ENCODE measurements at regions of chr19 and their contacts with region 1.

Region 1: GRCh38 chr19:40025938-40026596 is 29.2 kb downstream of the ZNF546 start:
- DNase-seq: no peak
- ATAC-seq: no peak
- H3K4me3 ChIP-seq: no peak overlapping the region
- H3K27ac ChIP-seq: no peak overlapping the region
- H3K4me1 ChIP-seq: no peaks in the 10 kb centered on the region
- H3K27me3 ChIP-seq: no peaks in the 10 kb centered on the region
- CTCF ChIP-seq: no peak

Region 2: DNA sequence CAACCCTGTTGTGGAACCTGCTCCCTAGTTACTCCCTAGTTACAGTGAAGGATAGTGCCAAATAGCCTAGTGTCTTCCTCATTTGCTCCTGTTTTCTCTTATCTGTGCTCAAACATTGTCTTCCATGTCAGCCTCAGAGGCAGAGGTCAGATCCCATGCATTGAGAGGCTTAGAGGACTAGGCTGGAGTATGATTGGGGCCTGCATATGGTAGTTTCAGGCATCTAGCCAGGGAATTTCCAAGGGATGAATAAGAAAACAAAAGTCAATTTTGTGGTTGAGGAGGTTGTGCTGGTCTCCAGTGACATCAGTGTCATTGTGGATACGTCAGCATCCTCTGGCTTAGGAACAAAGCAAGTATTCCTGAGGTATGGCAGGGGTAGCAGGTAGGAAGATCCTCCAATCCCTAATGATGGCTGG is 19.8 kb before region 1 on chr19:
- CTCF ChIA-PET with region 1: no interaction called
- POLR2A ChIA-PET with region 1: interaction called, 19 read pairs
- intact Hi-C with region 1: no loop called
- DNase-seq: peak; percentile 84
- ATAC-seq: peak; percentile 65
- H3K4me3 ChIP-seq: no peak overlapping the region
- H3K27ac ChIP-seq: peak overlapping the region; percentile 76
- H3K4me1 ChIP-seq: peaks cover 12% of the 10 kb centered on the region
- H3K27me3 ChIP-seq: no peaks in the 10 kb centered on the region
- CTCF ChIP-seq: no peak